ENCODE measurements at regions of chr3 and their contacts with region 1.

Region 1: GRCh38 chr3:9352917-9353752 is 9.7 kb upstream of the THUMPD3 start:
- DNase-seq: peak; percentile 62
- CTCF ChIP-seq: peak; percentile 82

Region 2: GRCh38 chr3:8851719-8852118 is 501.4 kb before region 1 on chr3:
- CTCF ChIA-PET with region 1: no interaction called
- POLR2A ChIA-PET with region 1: no interaction called
- DNase-seq: no peak
- CTCF ChIP-seq: no peak

Region 3: GRCh38 chr3:9330166-9330703 is 22.9 kb before region 1 on chr3:
- CTCF ChIA-PET with region 1: interaction called, 12 read pairs
- POLR2A ChIA-PET with region 1: no interaction called
- DNase-seq: no peak
- CTCF ChIP-seq: no peak

Region 4: DNA sequence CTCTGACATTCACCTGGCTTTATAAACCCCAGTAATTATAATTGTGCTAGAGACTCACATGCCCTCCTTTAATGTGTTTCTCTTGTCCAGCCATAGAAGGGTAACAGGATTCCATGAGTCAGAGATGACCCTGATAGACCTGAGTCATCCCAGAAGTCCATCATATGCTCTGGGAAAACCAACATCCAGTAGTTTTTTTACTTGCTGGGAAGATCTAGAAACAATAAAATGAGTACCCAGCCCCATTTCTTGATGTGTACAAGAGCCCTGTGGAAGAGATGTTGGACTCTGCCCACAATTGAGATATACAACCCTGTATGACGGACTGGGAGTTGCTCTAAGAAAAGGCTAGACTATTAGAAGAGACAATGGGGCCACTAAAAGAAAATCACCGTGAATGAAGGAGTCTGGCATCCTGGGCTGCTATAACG is 12.6 kb before region 1 on chr3:
- CTCF ChIA-PET with region 1: interaction called, 13 read pairs
- POLR2A ChIA-PET with region 1: no interaction called
- DNase-seq: no peak
- CTCF ChIP-seq: no peak

Measured in GM10248 (cell line).